Psoas muscle (tissue), 8 donors: ENCODE measurements at regions of chr10 and their contacts with region 1.

Region 1: DNA sequence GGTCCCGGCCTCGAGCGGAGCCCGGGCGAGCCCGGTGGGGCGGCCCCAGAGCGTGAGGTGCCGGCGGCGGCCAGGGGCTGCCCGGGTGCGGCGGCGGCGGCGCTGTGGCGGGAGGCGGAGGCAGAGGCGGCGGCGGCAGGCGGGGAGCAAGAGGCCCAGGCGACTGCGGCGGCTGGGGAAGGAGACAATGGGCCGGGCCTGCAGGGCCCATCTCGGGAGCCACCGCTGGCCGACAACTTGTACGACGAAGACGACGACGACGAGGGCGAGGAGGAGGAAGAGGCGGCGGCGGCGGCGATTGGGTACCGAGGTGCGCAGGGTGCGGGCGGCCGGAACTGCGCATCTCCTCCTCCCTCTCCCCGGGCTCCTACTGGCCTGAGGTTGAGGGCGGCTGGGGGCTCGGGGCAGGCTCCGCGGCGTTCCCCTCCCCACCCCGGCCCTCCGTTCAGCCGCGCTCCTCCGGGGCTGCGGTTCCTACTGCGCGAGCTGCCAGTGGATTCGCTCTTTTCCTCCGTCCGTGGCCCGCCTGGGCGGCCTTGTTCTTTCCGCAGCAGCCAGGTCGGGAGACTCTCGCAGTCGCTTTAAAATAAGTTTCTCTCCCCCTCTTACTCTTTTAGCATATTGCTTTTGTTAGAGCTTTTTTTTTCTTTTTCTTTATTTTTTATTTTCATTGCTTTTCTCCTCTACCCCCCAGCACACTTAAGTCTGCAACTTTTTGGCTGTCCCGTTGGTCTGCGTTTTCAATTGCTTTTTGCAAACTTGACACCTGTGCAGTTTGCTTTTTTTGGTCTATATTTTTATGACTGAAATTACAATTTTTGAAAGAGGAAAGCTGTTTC is 605 bp downstream of the SIRT1 start:
- DNase-seq: peak; percentile 83 to 91
- ATAC-seq: peak; percentile 64 to 75 (median 73)
- H3K4me3 ChIP-seq: peak overlapping the region; percentile 88
- H3K27ac ChIP-seq: peak overlapping the region; percentile 95
- H3K4me1 ChIP-seq: peaks cover 19% of the 10 kb centered on the region
- H3K27me3 ChIP-seq: no peaks in the 10 kb centered on the region
- CTCF ChIP-seq: no peak

Region 2: DNA sequence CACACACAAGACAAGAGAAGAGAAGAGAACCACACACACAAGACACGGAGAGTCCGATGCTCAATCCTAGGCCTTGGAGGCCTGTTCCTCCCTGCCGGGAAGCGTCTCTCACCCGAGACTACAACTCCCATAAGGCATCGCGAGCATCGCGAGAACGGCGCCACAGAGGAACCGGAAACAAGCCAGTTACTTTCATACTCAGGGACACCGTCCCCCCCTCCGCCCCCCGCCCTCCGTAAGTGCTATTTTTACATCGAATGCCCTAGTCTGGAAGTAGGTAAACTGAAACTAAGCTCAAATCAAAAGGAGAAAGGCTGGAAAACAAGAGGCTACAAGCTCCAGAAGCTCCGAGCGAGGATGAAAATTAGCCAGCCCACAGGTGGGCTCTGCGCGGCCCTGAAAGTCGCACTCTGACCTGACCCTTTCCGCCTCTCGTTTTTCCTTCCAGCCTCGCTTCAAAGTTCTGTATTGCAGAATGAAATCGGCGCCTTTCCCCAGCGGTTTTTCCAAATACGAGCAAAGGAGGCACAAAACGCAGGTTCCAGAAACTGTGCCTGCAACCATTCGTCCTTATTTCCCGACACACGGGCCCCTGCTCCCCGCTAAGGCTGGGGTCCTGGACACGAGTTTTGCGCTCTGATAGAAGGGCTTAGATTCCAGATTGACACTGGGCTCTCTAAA is 35.6 kb before region 1 on chr10:
- intact Hi-C with region 1: loop called in 1 of 2 experiments (anchors 2 kb)
- DNase-seq: peak; percentile 96 to 98
- ATAC-seq: peak; percentile 98 to 100 (median 98)
- H3K4me3 ChIP-seq: peak overlapping the region; percentile 96
- H3K27ac ChIP-seq: peak overlapping the region; percentile 99
- H3K4me1 ChIP-seq: peaks cover 5% of the 10 kb centered on the region
- H3K27me3 ChIP-seq: no peaks in the 10 kb centered on the region
- CTCF ChIP-seq: peak; percentile 36

Region 3: GRCh38 chr10:68074775-68075549 is 189.9 kb after region 1 on chr10 and contains the start of gene HERC4:
- intact Hi-C with region 1: loop called in 1 of 2 experiments (anchors 5 kb)
- DNase-seq: peak; percentile 95 to 97
- ATAC-seq: peak; percentile 97 to 98 (median 98)
- H3K4me3 ChIP-seq: peak within 1 kb of the TSS; percentile 88
- H3K27ac ChIP-seq: peak within 1 kb of the TSS; percentile 99
- H3K4me1 ChIP-seq: peaks cover 34% of the 10 kb centered on the region
- H3K27me3 ChIP-seq: no peaks in the 10 kb centered on the region
- CTCF ChIP-seq: no peak
- total RNA-seq, gene HERC4: 15.1 to 29.4 (median 20.6) TPM